ENCODE measurements at regions of chrX and their contacts with region 1.

Region 1: GRCh38 chrX:113136836-113137235 is 296.2 kb upstream of the AMOT start:
- DNase-seq: no peak
- ATAC-seq: no peak
- H3K4me3 ChIP-seq: no peak overlapping the region
- H3K27ac ChIP-seq: no peak overlapping the region
- H3K4me1 ChIP-seq: no peaks in the 10 kb centered on the region
- H3K27me3 ChIP-seq: no peaks in the 10 kb centered on the region
- CTCF ChIP-seq: no peak
- POLR2A ChIP-seq: no peak
- RAD21 ChIP-seq: no peak

Region 2: GRCh38 chrX:111181951-111182350 is 1954.9 kb before region 1 on chrX:
- CTCF ChIA-PET with region 1: no interaction called
- POLR2A ChIA-PET with region 1: no interaction called
- dilution Hi-C with region 1: no loop called
- in situ Hi-C with region 1: no loop called
- intact Hi-C with region 1: loop called (anchors 5 kb)
- DNase-seq: no peak
- ATAC-seq: no peak
- H3K4me3 ChIP-seq: no peak overlapping the region
- H3K27ac ChIP-seq: no peak overlapping the region
- H3K4me1 ChIP-seq: no peaks in the 10 kb centered on the region
- H3K27me3 ChIP-seq: no peaks in the 10 kb centered on the region; the same call in 1 of the 2 replicates
- CTCF ChIP-seq: no peak
- POLR2A ChIP-seq: no peak
- RAD21 ChIP-seq: no peak

Region 3: DNA sequence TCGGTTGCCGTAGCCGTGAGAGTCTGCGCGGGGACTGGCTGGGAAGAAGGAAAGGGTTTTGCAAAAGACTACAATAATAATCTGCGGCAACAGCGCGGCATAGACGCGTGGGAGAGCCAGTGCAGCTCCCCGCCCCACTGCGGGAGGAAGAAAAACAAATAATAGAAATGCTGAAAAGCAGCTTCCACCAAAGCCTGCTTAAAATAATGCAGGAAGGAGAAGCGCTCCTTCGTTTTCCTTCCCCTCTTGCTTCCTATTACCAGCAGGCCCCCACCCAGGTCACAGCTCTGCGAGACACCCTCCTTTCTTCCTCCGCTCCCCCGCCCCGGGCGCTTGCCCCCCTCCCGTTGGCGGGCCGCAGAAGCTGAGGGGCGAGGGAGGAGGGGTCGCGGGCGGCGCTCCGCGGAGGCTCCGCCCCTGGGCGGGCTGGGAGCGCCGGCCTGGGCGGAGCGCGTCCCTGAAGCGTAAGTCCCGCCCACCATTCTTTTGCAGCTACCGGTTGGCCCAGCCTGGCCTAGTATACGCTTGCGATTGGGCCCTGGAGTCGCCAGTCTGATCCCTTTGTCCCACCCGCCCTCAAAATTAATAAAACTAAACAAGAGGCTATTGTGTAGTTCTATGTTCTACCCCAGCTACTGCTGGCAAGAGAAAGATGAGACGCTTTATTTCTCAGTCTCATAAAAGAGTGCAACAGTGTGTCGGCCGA is 295.6 kb before region 1 on chrX:
- CTCF ChIA-PET with region 1: no interaction called
- POLR2A ChIA-PET with region 1: no interaction called
- dilution Hi-C with region 1: no loop called
- in situ Hi-C with region 1: no loop called
- intact Hi-C with region 1: no loop called
- DNase-seq: peak; percentile 87
- ATAC-seq: peak; percentile 97
- H3K4me3 ChIP-seq: peak overlapping the region; percentile 76
- H3K27ac ChIP-seq: peak overlapping the region; percentile 35
- H3K4me1 ChIP-seq: no peaks in the 10 kb centered on the region; the same call in 1 of the 2 replicates
- H3K27me3 ChIP-seq: no peaks in the 10 kb centered on the region; the same call in 1 of the 2 replicates
- CTCF ChIP-seq: no peak
- POLR2A ChIP-seq: no peak
- RAD21 ChIP-seq: no peak

Measured in IMR-90 (cell line).